ENCODE measurements at regions of chr3 and their contacts with region 1.

Region 1: GRCh38 chr3:9302425-9303181 is 53.2 kb upstream of the SRGAP3 start:
- DNase-seq: peak; percentile 85
- H3K4me3 Mint-ChIP-seq: no peak overlapping the region
- H3K27ac Mint-ChIP-seq: no peak overlapping the region
- H3K4me1 Mint-ChIP-seq: peaks cover 7% of the 10 kb centered on the region
- H3K27me3 Mint-ChIP-seq: peaks cover 17% of the 10 kb centered on the region
- CTCF ChIP-seq: peak; percentile 86

Region 2: GRCh38 chr3:8987645-8988383 is 314.8 kb before region 1 on chr3:
- CTCF ChIA-PET with region 1: interaction called, 7 read pairs
- intact Hi-C with region 1: loop called (anchors 1 kb)
- DNase-seq: peak; percentile 56
- H3K4me3 Mint-ChIP-seq: no peak overlapping the region
- H3K27ac Mint-ChIP-seq: no peak overlapping the region
- H3K4me1 Mint-ChIP-seq: no peaks in the 10 kb centered on the region
- H3K27me3 Mint-ChIP-seq: no peaks in the 10 kb centered on the region
- CTCF ChIP-seq: peak; percentile 52